ENCODE measurements at regions of chr11 and their contacts with region 1.

Region 1: GRCh38 chr11:16917941-16918340 is 96.3 kb downstream of the PLEKHA7 start:
- DNase-seq: no peak
- ATAC-seq: no peak
- H3K4me3 ChIP-seq: no peak overlapping the region
- H3K4me3 Mint-ChIP-seq: no peak overlapping the region
- H3K27ac ChIP-seq: no peak overlapping the region
- H3K27ac Mint-ChIP-seq: no peak overlapping the region
- H3K4me1 ChIP-seq: no peaks in the 10 kb centered on the region
- H3K4me1 Mint-ChIP-seq: no peaks in the 10 kb centered on the region
- H3K27me3 ChIP-seq: no peaks in the 10 kb centered on the region
- H3K27me3 Mint-ChIP-seq: peaks cover 4 to 21% (median 7%) of the 10 kb centered on the region in 5 donors

Region 2: GRCh38 chr11:16703795-16704194 is 214.1 kb before region 1 on chr11:
- CTCF ChIA-PET with region 1: no interaction called
- POLR2A ChIA-PET with region 1: no interaction called
- intact Hi-C with region 1: loop called in 1 of 2 experiments (anchors 5 kb)
- DNase-seq: no peak
- ATAC-seq: no peak
- H3K4me3 ChIP-seq: no peak overlapping the region
- H3K4me3 Mint-ChIP-seq: no peak overlapping the region
- H3K27ac ChIP-seq: no peak overlapping the region
- H3K27ac Mint-ChIP-seq: no peak overlapping the region
- H3K4me1 ChIP-seq: no peaks in the 10 kb centered on the region
- H3K4me1 Mint-ChIP-seq: no peaks in the 10 kb centered on the region
- H3K27me3 ChIP-seq: peaks cover 0 to 3% of the 10 kb centered on the region in 2 donors
- H3K27me3 Mint-ChIP-seq: peaks cover 12 to 29% (median 13%) of the 10 kb centered on the region in 5 donors

Region 3: DNA sequence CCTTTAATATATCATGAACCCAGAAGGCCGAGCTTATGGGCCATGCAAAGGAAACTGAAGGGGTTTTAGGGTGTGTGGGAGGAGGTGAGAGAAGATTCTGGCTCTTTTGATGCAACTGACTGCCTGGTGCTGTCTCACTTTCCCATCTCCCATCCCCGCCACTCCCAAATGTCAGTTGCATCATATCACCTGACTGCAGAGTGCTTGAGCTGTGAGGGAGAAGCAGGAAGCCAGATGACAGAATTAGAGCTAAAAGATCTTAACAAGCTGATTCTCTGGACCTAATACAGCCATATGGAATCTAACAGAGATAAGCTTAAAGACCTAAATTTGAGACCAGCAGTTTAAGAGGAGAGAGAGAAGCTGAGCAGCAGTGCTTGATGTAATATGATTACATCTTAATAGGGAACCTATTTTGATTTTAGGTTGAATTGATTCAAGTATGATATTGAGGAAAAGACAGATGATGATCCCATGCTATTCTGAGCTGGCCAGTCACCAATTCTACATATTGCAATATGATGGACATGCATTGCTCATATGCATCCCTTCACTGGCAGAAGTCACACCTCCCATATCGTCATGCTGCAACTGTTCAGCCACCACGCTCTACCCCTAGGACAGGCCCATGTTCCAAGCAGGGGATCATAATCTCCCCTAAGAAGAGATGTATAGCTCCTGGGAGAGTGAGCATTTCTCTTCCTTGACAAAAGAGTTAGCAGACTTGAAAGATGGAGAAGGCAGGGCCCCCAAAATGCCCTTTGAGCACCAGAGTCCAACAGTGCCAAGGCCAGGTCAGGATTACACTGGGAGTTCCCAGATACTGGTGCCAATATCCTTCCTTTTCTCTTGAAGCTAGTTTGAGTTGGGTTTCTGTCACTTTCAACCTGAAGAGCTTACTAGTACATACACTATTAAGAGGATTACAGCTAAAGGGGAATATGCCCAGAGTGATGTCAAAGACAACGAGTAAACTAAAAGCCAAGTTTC is 51.4 kb after region 1 on chr11:
- CTCF ChIA-PET with region 1: no interaction called
- POLR2A ChIA-PET with region 1: no interaction called
- intact Hi-C with region 1: no loop called
- DNase-seq: no peak
- ATAC-seq: no peak
- H3K4me3 ChIP-seq: no peak overlapping the region
- H3K4me3 Mint-ChIP-seq: no peak overlapping the region
- H3K27ac ChIP-seq: no peak overlapping the region
- H3K27ac Mint-ChIP-seq: no peak overlapping the region
- H3K4me1 ChIP-seq: no peaks in the 10 kb centered on the region
- H3K4me1 Mint-ChIP-seq: peaks cover 0 to 11% (median 0%) of the 10 kb centered on the region in 7 donors
- H3K27me3 ChIP-seq: no peaks in the 10 kb centered on the region
- H3K27me3 Mint-ChIP-seq: no peaks in the 10 kb centered on the region

Region 4: GRCh38 chr11:17770048-17770652 is 852.2 kb after region 1 on chr11:
- CTCF ChIA-PET with region 1: no interaction called
- POLR2A ChIA-PET with region 1: no interaction called
- intact Hi-C with region 1: no loop called
- DNase-seq: no peak
- ATAC-seq: no peak
- H3K4me3 ChIP-seq: no peak overlapping the region
- H3K4me3 Mint-ChIP-seq: no peak overlapping the region
- H3K27ac ChIP-seq: no peak overlapping the region
- H3K27ac Mint-ChIP-seq: no peak overlapping the region
- H3K4me1 ChIP-seq: no peaks in the 10 kb centered on the region
- H3K4me1 Mint-ChIP-seq: no peaks in the 10 kb centered on the region
- H3K27me3 ChIP-seq: no peaks in the 10 kb centered on the region
- H3K27me3 Mint-ChIP-seq: no peaks in the 10 kb centered on the region

Measured in naive thymus-derived CD4-positive, alpha-beta T cell (primary cell).